Posterior vena cava (tissue), 2 donors: ENCODE measurements at regions of chr2 and their contacts with region 1.

Region 1: GRCh38 chr2:184824597-184824996 is 226.3 kb downstream of the ZNF804A start:
- DNase-seq: no peak

Region 2: DNA sequence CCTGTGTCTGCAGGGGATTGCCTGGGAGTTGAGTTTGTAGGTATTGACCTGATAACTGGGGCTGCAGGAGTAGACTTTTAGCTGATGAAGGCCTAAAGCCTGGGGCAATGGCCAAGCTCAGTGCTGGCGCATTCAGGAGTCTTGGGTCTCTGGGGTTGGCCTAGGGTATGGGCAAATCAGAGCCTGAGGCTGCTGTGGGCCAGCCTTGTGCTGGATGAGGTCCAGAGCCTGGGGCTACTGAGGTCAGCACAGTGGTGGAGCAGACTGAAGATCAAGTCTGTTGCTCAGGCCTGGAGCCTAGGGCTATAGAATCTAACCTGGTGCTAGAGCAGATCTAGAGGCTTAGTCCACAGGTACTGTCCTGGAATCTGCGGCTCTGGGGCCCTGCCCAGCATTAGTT is 36.1 kb after region 1 on chr2:
- intact Hi-C with region 1: loop called in 1 of 2 experiments (anchors 2 kb)
- DNase-seq: no peak